AG04449 (cell line): ENCODE measurements at regions of chr11 and their contacts with region 1.

Region 1: DNA sequence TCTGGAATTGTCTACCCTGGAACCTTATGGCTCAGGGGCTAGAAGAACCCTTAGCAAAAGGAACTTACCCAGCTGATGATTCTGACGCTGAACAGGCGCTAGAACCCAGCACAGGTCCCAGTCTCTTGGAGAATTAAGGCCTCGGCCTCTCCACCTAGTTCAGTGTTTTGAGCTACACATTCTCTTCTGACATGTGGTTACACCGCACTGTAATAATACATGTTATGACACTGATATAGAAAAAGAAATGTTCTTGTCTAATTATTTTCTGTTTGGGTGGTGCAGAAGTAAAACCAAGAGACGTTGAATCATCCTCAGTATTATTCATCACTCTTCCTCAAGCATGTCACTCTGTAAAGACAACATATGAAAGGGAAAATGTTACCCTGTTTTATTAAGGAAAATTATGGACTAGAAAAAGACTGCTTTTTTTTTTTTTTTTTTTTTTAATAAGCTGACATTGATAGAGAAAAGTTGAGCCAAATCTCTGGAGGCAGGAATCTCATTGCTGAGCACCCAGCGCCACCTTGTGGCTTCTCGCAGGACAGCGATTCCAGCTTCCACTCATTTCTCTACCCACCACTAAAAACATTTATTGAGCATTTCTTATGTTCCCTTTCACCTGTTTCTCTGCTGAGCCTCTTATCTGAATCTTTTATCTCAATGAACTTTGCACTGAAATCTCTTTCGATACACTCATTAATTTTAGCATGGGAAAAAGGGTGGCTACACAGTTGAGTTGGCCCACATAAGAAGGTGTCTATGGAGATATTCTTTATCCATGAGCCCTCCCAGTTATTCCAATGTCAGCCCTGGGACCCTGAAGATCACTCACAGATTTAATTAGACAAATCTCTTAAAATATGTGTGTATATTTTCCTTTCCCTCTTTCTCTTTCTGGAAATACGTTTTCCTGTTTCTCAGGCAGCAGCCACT is 12.6 kb upstream of the APLNR start:
- DNase-seq: no peak
- H3K4me3 ChIP-seq: no peak overlapping the region
- CTCF ChIP-seq: peak; percentile 82

Region 2: GRCh38 chr11:56846631-56847576 is 402.7 kb before region 1 on chr11:
- CTCF ChIA-PET with region 1: interaction called, 288 read pairs
- POLR2A ChIA-PET with region 1: no interaction called
- DNase-seq: no peak
- H3K4me3 ChIP-seq: no peak overlapping the region
- CTCF ChIP-seq: no peak

Region 3: DNA sequence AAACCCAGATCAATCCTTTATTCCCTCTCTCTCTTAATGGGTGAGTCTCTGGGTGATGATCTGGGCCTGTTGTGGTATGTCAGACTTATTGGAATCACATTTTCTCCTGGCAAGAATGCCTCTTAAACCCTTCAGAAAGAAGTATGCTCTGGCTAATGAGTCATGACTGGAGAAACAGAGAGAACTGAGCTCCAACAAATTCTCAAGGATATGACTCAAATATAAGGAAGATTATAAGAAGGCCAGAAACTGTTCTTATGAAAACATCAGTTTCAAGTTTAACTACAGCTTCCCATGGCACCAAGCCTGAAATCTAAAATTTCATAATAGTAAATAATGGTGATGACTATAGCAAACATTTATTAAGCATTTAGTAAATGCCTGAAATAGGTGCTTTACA is 177.0 kb before region 1 on chr11:
- CTCF ChIA-PET with region 1: interaction called, 28 read pairs
- POLR2A ChIA-PET with region 1: interaction called, 4 read pairs
- DNase-seq: peak; percentile 97
- H3K4me3 ChIP-seq: no peak overlapping the region
- CTCF ChIP-seq: no peak

Region 4: GRCh38 chr11:57116654-57117053 is 133.0 kb before region 1 on chr11:
- CTCF ChIA-PET with region 1: interaction called, 496 read pairs
- POLR2A ChIA-PET with region 1: no interaction called
- DNase-seq: peak; percentile 3
- H3K4me3 ChIP-seq: no peak overlapping the region
- CTCF ChIP-seq: peak; percentile 18

Region 5: DNA sequence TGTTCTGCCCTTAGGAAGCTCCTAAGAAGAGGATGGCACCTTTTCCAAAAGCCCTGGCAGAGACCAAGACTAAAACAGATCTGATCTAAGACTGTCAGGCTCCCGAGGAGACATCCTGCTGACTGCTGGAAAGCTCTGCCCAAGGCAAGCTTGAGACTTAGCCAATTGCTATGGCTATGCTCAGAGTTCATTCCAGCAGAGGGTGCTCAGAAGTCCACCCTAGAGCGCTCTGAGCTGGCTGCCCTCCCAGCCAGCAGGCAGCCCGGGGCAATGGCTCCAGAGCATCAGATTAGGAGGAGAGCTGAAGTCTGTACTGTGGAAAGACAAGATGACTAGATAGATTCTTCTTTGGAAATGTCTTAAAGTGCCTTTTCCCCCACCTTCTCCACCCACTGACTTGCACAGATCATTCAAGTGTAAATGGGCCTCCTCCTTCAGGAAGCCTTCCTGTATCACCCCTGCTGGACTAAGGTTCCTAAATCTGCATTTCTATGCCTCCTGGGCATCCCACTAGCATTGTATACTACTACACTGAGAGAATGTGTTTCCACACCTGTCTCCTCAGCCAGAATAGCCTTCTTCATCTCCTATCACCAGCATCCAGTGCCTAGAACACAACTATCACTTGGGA is 44.5 kb before region 1 on chr11:
- CTCF ChIA-PET with region 1: interaction called, 124 read pairs
- POLR2A ChIA-PET with region 1: no interaction called
- DNase-seq: peak; percentile 50
- H3K4me3 ChIP-seq: no peak overlapping the region
- CTCF ChIP-seq: peak; percentile 34

Region 6: DNA sequence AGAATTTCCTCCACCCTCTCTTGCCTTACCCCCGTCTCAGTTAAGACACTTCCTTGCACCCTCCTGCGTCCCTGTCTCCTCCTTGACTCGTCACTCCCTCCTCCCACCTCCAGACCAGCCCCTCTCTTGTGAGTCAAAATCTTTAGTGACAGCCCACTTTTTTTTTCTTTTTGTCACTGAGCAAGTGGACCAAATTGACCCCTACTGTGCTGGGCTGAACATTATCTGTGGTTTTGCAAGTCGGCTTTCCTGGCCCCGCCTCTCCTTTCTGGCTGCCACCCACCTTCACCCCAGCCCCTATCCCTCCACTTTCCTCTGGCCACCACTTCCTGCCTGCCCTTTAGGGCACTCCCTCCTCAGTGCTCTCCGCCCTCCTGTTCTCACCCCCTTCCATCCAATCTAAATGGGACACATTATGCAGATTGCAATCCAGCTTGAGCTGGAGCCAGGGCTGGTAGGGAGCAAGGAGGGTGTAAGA is 12.4 kb before region 1 on chr11 and contains the start of gene APLNR:
- CTCF ChIA-PET with region 1: interaction called, 85 read pairs
- POLR2A ChIA-PET with region 1: interaction called, 4 read pairs
- DNase-seq: no peak
- H3K4me3 ChIP-seq: no peak within 1 kb of the TSS
- CTCF ChIP-seq: no peak

Region 7: DNA sequence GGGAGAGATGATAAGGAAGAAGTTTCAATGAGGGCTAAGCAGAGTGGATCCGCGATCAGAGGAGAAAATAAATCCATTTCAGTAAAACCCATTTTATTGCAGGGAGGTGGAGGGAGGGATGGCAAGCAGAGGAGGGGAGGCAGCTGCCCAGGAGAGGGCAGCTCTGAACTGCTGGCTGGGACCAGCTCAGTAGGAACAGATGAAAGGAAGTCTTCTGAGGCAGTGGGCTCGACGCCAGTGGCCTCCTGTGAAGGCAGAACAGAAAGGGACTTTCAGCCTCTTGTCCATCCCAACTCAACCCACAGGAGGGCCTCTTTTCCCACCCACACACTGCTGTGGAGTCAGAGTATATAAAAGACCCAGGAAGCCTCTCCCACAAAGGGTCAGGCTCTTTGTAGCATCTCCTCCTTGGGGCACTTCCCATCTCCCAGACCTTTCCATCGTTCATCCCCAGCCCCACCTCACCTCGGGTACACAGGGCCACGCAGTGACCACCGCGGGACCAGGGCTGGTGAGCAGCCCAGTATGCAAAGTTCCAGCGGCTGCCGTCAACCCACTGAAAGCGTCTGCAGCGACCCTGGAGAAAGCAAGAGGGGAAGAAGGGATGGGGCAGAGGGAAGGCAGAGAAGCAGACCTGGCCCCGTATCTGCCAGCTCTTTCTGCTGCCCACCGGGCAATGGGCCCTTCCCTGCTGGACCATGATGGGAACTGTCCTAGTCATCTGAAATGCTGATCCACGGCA is 137.8 kb after region 1 on chr11:
- CTCF ChIA-PET with region 1: no interaction called
- POLR2A ChIA-PET with region 1: no interaction called
- DNase-seq: no peak
- H3K4me3 ChIP-seq: no peak overlapping the region
- CTCF ChIP-seq: no peak

Region 8: GRCh38 chr11:57585301-57585700 is 335.6 kb after region 1 on chr11:
- CTCF ChIA-PET with region 1: no interaction called
- POLR2A ChIA-PET with region 1: no interaction called
- DNase-seq: no peak
- H3K4me3 ChIP-seq: no peak overlapping the region
- CTCF ChIP-seq: no peak